Dendritic cell treated with granulocyte-macrophage colony-stimulating factor and Interleukin-4, amounts not matched to agents 40 ng/mL and 50 ng/mL, for 4 days (primary cell): ENCODE measurements at regions of chr3 and their contacts with region 1.

Region 1: DNA sequence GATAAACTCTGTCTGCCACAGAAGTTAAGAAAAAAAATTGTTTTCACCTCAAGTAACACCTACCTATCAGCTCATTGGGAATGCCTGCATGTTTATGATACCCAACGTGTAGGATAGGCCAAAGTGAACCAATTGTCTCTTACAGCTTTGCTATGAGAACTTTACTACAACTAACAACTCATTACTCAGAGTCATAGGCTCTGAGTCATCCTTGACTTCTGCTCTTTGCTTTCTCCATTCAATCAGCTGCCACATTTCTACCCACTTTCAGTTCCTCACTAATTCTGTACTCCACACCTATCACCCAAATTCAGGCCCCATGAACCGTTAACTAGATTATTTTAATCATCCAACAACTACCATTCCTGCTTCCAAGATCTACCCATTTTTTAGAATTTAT is 843.9 kb downstream of the TUSC7 start:
- H3K4me3 Mint-ChIP-seq: no peak overlapping the region
- H3K27ac Mint-ChIP-seq: no peak overlapping the region
- H3K4me1 Mint-ChIP-seq: peaks cover 31% of the 10 kb centered on the region
- H3K27me3 Mint-ChIP-seq: peaks cover under 1% of the 10 kb centered on the region

Region 2: GRCh38 chr3:117350371-117350770 is 203.1 kb before region 1 on chr3:
- intact Hi-C with region 1: no loop called
- H3K4me3 Mint-ChIP-seq: no peak overlapping the region
- H3K27ac Mint-ChIP-seq: no peak overlapping the region
- H3K4me1 Mint-ChIP-seq: no peaks in the 10 kb centered on the region
- H3K27me3 Mint-ChIP-seq: no peaks in the 10 kb centered on the region

Region 3: GRCh38 chr3:117719316-117719926 is 166.0 kb after region 1 on chr3:
- intact Hi-C with region 1: loop called (anchors 5 kb)
- H3K4me3 Mint-ChIP-seq: no peak overlapping the region
- H3K27ac Mint-ChIP-seq: no peak overlapping the region
- H3K4me1 Mint-ChIP-seq: peaks cover 28% of the 10 kb centered on the region
- H3K27me3 Mint-ChIP-seq: peaks cover 5% of the 10 kb centered on the region

Region 4: GRCh38 chr3:117873249-117873600 is 319.8 kb after region 1 on chr3:
- intact Hi-C with region 1: no loop called
- H3K4me3 Mint-ChIP-seq: no peak overlapping the region
- H3K27ac Mint-ChIP-seq: no peak overlapping the region
- H3K4me1 Mint-ChIP-seq: no peaks in the 10 kb centered on the region
- H3K27me3 Mint-ChIP-seq: no peaks in the 10 kb centered on the region